A549 (cell line): ENCODE measurements at regions of chr9 and their contacts with region 1.

Region 1: DNA sequence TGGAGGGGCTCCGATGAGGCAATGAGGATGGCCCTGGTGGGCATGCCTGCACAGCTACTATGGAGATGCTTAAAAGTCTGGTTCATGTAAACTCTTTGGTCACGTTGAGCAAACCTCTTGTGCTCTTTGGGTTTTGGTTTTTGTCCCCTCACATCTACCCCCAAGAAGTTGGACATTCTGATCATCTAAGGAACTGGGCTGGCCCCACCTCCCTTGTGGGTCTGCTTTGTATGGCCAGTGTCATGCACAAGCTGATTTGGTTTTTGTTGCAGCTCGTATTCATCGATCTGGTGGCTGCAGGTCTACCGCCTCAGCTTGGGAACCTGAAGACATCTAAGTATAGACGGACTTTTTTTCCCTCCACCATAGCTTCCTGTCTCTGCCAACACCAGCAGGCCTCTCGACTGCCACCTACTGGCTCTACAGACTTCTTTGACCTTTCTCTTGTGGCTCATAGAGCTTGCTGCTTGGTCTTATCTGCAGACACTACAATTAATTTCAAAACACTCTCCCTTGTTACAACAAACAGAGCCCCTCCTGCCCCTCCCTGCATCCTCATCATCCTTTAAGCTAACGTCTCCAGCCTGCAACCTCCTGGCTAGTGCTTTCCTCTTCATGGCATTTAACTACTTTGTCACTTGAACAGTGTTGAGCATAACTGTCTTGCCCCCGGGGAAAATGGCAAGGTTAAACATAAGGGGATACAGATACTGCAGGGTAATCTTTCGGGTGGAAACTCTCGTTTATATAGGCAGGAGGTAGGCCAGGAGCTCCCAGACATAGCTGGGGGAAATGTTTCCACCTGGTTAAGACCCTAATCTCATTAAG is 34.5 kb downstream of the TSTD2 start:
- DNase-seq: peak; percentile 61 to 81
- ATAC-seq: peak; percentile 89 to 94
- H3K4me3 ChIP-seq: no peak overlapping the region
- H3K27ac ChIP-seq: no peak overlapping the region
- H3K4me1 ChIP-seq: no peaks in the 10 kb centered on the region
- CTCF ChIP-seq: peak; percentile 83
- EP300 ChIP-seq: no peak
- POLR2A ChIP-seq: no peak
- RAD21 ChIP-seq: peak; percentile 72 to 75

Region 2: GRCh38 chr9:97176206-97176605 is 422.5 kb before region 1 on chr9:
- CTCF ChIA-PET with region 1: no interaction called
- POLR2A ChIA-PET with region 1: no interaction called
- DNase-seq: no peak
- ATAC-seq: no peak
- H3K4me3 ChIP-seq: no peak overlapping the region
- H3K27ac ChIP-seq: no peak overlapping the region
- H3K4me1 ChIP-seq: no peaks in the 10 kb centered on the region
- CTCF ChIP-seq: no peak
- EP300 ChIP-seq: no peak
- POLR2A ChIP-seq: no peak
- RAD21 ChIP-seq: no peak

Region 3: GRCh38 chr9:97411789-97412625 is 186.7 kb before region 1 on chr9 and contains the start of gene TDRD7:
- CTCF ChIA-PET with region 1: interaction called, 38 read pairs
- POLR2A ChIA-PET with region 1: no interaction called
- DNase-seq: peak; percentile 76 to 83
- ATAC-seq: peak; percentile 86 to 90
- H3K4me3 ChIP-seq: peak within 1 kb of the TSS; percentile 100
- H3K27ac ChIP-seq: peak within 1 kb of the TSS; percentile 88 to 93
- H3K4me1 ChIP-seq: peaks cover 9% of the 10 kb centered on the region; the same call in 2 of the 3 replicates
- CTCF ChIP-seq: peak; percentile 99
- EP300 ChIP-seq: no peak
- POLR2A ChIP-seq: no peak
- RAD21 ChIP-seq: peak; percentile 60 to 83
- polyA plus RNA-seq, gene TDRD7: 15.7 and 18.3 TPM in 2 replicates

Region 4: DNA sequence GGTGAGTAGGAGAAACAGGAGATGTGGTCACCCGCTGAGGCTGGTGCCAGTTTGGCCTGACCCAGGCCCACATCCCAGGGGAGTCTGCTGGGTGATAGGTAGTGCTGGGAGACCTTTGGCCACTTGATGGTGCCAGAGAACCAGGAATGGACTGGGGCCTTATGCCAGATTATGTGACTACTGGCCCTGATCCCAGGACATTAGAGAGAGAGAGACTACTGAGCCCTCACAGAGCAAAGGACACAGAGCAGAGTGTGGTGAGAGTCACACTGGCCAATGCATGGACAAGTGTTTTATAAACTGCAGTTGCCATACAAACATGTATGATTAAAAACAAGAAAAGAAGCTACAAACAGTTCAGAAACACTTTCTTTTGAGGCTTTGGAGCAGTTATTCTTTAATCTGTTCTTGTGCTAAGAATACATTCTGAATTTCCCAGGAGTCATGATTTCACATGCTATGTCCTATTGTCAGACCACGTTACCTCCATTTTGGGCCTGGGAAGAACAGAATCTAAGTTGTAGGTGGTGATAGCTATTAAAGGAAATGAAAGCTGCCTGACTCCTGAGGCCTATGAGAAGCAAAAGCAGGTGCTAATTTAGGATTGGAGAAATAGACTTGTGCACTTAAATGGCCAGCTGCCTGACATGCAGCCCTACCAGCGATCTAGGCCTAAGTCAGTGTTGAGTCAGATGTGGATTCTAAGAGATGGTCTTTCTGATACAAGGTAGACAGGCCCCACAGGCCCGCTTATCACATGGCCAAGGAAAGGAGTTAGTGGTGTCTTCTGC is 129.8 kb before region 1 on chr9:
- CTCF ChIA-PET with region 1: interaction called, 340 read pairs
- POLR2A ChIA-PET with region 1: interaction called, 9 read pairs
- DNase-seq: peak; percentile 46 to 70
- ATAC-seq: peak; percentile 89 to 99
- H3K4me3 ChIP-seq: no peak overlapping the region
- H3K27ac ChIP-seq: no peak overlapping the region
- H3K4me1 ChIP-seq: no peaks in the 10 kb centered on the region
- CTCF ChIP-seq: peak; percentile 80
- EP300 ChIP-seq: no peak
- POLR2A ChIP-seq: no peak
- RAD21 ChIP-seq: peak; percentile 88 to 94

Region 5: DNA sequence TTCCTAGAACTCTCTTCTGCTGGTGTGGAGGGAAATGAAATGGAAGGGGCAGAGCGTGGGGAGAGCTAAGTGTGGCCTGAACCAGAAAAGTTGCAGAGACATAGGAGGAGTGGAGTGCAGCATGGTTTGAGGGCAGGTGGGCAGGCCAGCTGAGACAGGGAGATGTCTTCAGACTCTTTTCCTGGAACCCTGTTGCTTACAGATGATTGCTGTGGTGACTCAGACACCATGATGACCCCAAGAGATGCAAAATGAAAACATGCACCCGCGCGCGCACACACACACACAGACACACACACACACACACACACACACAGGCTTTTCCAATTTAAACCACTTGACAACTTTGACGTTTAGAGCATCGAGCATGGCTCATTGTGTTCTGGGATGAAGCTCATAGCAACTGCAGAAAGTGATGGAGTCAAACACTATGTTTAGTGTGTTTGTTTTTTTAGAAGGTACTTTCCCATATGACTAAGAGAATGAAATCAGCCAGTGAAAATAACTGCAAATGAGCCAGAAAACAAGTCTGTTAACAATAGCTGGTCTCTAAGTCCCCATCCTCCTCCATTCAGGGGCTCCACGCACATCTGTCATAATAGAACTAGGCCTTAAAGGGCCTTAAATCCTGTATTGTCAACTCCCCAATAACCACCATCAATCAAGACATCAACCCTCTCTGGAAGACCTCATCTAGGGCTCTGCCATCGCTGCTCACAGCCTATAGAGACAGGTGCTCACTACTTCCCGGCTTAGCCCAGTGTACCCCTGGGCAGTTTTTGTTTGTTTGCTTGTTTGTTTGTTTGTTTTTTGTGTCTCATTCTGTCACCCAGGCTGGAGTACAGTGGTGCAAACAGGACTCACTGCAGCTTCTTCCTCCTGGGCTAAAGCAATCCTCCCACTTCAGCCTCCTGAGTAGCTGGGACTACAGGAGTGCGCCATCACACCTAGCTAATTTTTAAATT is 87.6 kb before region 1 on chr9:
- CTCF ChIA-PET with region 1: interaction called, 13 read pairs
- POLR2A ChIA-PET with region 1: no interaction called
- DNase-seq: peak in 1 of 2 experiments; percentile 51
- ATAC-seq: peak; percentile 33 to 70; a peak in 3 of 6 replicates
- H3K4me3 ChIP-seq: no peak overlapping the region
- H3K27ac ChIP-seq: no peak overlapping the region
- H3K4me1 ChIP-seq: peaks cover 11% of the 10 kb centered on the region; the same call in 2 of the 3 replicates
- CTCF ChIP-seq: no peak
- EP300 ChIP-seq: no peak
- POLR2A ChIP-seq: no peak
- RAD21 ChIP-seq: no peak

Region 6: DNA sequence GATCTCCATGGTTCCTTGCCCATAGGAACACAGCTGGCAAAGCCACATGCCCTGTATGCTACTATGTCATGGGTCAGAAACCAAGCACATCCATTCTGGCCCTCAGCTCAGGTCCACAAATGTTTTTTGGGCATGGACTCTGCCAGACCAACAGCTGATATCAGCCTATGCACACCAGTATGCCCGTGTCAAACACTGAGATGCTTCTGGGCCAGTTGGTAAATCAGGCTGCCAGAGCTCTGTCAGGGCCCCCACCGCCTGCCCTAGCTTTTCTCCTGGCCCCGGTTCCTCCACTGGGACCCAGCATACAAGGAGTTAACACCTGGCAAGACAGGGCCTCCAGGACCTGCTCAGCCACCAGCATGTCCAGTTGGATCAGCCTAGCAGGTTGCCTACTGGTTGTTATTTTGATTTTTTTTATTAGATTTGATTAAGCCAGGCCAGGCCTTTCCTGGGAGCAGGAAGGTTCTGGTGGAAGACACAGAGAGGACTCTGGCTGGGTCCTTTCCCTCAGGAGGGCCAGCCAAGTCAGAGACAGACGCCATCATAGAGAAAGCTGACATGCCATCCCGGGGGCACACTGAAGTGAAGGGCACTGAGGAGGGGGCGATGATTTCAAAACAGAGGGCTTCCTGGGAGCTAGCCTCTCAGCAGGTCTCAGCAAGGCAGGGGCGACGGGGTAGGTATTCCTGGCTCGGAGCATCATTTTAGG is 31.3 kb before region 1 on chr9:
- CTCF ChIA-PET with region 1: interaction called, 21 read pairs
- POLR2A ChIA-PET with region 1: interaction called, 3 read pairs
- DNase-seq: no peak
- ATAC-seq: no peak
- H3K4me3 ChIP-seq: no peak overlapping the region
- H3K27ac ChIP-seq: no peak overlapping the region
- H3K4me1 ChIP-seq: peaks cover 11% of the 10 kb centered on the region
- CTCF ChIP-seq: no peak
- EP300 ChIP-seq: no peak
- POLR2A ChIP-seq: no peak
- RAD21 ChIP-seq: no peak

Region 7: DNA sequence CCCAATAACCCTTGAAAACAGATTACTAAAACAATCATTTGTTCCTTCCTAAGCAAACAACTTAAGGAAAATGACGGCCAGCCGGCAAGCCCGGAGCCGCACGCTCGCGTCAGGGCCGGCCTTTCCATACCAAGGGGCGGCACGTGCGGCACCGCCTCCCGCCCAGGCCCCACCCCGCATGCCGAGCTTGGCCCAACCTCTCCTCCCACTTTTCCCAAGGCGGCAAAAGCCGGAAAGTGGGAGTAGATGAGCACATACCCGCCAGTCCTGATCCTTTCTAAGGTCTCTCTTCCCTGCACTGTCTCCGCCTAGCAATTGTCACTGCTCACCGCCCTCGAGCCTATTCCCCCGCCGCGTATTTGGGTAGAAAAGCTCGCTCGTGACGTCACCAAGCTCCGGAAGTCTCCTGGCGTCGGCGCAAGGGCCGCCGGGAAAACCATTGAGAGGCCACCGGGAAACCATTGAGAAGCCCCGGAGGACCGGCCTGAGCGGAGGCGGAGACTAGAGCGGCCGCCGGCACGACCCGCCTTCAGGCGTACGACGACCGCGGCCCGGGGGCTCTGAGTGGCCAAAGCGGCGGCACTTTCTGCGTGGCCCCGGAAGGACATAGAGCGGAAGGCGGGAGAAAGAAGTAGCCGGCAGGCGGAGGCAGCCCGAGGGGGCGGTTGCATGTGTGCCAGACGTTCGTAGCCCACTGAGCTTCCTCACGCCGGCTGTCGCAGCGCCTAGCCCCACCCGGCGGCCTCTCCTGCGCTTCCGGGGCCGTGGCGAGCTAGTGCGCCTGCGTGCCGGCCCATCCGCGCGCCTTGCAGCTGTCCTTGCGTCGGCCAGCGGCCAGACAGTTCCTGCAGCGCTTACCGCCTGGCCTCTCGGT is 34.5 kb after region 1 on chr9 and contains the starts of genes NCBP1 and TSTD2:
- CTCF ChIA-PET with region 1: interaction called, 9 read pairs
- POLR2A ChIA-PET with region 1: interaction called, 13 read pairs
- DNase-seq: peak; percentile 91 to 98
- ATAC-seq: peak; percentile 91 to 97
- H3K4me3 ChIP-seq: peak within 1 kb of the TSS; percentile 96
- H3K27ac ChIP-seq: peak within 1 kb of the TSS; percentile 93 to 96
- H3K4me1 ChIP-seq: peaks cover 38% of the 10 kb centered on the region
- CTCF ChIP-seq: no peak
- EP300 ChIP-seq: no peak
- POLR2A ChIP-seq: peak; percentile 96
- RAD21 ChIP-seq: no peak
- polyA plus RNA-seq, gene NCBP1: 43.4 and 48.2 TPM in 2 replicates
- polyA plus RNA-seq, gene TSTD2: 33.3 and 37.4 TPM in 2 replicates